Mammary epithelial cell (primary cell): ENCODE measurements at regions of chr13 and their contacts with region 1.

Region 1: DNA sequence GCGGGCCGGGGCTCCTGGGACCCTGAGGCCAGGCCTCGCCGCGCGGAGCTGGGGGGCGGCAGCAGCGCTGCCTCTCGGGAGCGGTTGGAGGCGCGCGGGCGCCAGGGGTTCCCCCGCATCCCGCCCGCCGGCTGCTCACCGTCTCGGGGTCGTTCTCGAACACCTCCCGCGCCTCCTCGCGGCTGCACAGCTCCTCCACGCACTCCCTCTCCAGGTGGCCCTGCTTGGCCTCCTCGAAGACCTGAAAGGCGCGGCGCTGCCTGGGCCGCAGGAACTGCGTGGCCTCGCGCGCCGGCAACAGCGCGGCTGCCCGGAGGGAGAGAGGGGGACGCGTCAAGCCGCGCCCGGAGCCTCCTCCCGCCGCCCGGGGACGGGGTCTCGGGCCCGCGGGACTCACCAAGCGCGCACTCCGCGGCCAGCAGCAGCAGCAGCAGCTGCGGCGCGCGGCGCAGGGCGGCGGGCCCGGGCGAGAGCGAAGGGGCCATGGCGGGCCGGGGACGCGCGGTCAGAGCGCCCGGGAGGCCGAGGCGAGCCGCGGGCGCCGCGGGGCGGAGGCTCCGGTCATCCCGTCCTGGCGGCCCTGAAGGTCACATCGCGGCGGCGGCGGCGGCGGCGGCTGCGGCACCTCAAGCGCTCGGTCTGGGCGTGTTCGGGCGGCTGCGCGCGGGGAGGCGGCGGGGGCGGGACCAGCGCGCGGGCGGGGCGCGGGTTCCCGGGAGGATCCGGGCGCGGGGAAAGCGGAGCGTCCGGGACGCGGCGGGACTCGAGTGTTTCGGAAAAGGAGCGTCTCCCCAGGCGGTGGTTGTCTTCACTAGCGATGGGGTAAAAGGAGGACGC is at the start of gene GAS6:
- DNase-seq: peak; percentile 46
- H3K4me3 ChIP-seq: peak within 1 kb of the TSS; percentile 45 to 86 (median 66)
- H3K27ac ChIP-seq: peak within 1 kb of the TSS; percentile 71
- H3K4me1 ChIP-seq: peaks cover 38% of the 10 kb centered on the region
- H3K27me3 ChIP-seq: no peaks in the 10 kb centered on the region
- CTCF ChIP-seq: peak in 1 of 2 donors; percentile 32
- total RNA-seq, gene GAS6: 221 to 311 TPM

Region 2: DNA sequence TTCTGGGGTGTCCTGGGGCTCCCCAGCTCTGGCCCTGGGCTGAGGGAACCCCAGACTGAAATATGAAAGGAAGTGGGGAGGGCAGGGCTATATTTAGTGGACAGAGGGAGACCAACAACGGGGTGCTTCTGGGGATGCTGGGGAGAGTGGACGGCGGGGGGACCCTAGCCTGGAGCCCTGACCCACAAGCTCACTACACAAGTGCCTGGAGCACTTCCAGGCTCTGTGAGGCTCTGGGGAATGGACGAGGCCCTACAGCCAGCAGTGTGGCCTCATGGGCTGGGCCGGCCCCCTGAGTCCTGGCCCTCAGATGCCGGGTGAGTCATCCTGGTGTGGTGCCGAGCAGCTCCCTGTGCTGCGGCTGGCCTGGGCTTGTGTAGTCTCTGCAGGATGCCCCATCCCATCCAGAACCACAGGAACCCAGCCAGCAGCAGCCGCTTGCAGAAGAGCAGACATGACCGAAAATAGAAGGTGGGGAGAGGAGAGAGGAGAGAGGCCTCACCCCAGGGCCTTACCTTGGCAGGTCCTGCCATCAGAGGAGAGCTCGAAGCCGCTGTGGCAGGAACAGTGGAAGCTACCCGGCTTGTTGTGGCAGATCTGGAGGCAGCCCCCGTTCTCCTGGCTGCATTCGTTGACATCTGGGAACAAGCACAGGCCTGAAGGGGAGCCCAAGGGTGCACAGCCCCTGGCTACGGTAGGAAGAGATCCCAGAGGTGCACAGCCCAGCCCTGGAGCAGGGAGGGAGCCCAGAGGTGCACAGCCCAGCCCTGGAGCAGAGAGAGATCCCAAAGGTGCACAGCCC is 25.9 kb before region 1 on chr13:
- CTCF ChIA-PET with region 1: interaction called, 3 read pairs
- dilution Hi-C with region 1: no loop called
- in situ Hi-C with region 1: no loop called
- intact Hi-C with region 1: loop called (anchors 1 kb)
- DNase-seq: peak; percentile 98
- H3K4me3 ChIP-seq: peak overlapping the region in 2 of 3 experiments; percentile 48 to 50
- H3K27ac ChIP-seq: peak overlapping the region; percentile 95
- H3K4me1 ChIP-seq: peaks cover 47% of the 10 kb centered on the region
- H3K27me3 ChIP-seq: no peaks in the 10 kb centered on the region
- CTCF ChIP-seq: no peak

Region 3: DNA sequence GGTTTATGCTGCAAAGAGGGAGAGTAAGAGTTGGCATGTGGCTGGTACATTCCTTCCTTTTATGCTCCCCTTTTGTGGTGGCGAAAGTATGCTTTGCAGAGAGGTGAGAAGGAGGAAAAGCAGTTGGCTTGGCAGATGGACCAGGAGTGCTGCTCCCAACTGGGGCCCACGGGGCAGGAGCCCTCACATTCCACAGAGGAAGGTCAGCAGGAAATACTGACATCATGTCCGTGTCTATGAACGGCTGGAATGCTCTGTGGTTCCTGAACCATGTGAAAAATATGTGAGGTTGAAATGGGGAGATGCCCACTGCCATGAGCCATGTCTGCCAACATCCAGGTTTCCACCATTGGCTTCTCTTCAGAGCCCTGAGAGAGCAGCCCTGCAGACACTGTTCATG is 33.5 kb after region 1 on chr13:
- CTCF ChIA-PET with region 1: no interaction called
- dilution Hi-C with region 1: no loop called
- in situ Hi-C with region 1: no loop called
- intact Hi-C with region 1: loop called (anchors 2 kb)
- DNase-seq: peak; percentile 94
- H3K4me3 ChIP-seq: no peak overlapping the region
- H3K27ac ChIP-seq: peak overlapping the region; percentile 87
- H3K4me1 ChIP-seq: peaks cover 30% of the 10 kb centered on the region
- H3K27me3 ChIP-seq: no peaks in the 10 kb centered on the region
- CTCF ChIP-seq: no peak

Region 4: DNA sequence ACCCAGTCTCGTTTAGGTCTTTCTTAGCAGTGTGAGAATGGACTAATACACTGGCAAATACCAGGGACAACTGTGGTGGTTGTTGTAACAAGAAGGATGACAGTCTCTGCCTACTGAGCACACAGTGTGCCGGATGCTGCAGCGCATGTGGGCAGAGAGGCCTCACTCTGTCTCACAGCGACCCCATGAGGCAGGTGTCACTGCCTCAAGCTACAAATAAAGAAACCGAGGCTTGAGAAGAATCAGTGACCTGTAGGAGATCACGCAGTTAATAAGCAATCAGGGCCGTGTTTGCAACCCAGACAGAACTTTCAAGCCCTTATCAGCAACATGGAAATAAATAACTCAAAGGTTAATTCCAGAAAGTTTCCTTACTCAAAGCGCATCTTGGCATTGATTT is 40.8 kb after region 1 on chr13:
- CTCF ChIA-PET with region 1: no interaction called
- dilution Hi-C with region 1: no loop called
- in situ Hi-C with region 1: no loop called
- intact Hi-C with region 1: loop called (anchors 2 kb)
- DNase-seq: no peak
- H3K4me3 ChIP-seq: no peak overlapping the region
- H3K27ac ChIP-seq: no peak overlapping the region
- H3K4me1 ChIP-seq: peaks cover 4% of the 10 kb centered on the region
- H3K27me3 ChIP-seq: no peaks in the 10 kb centered on the region
- CTCF ChIP-seq: peak; percentile 45 to 69

Region 5: GRCh38 chr13:113914333-113915011 is 50.8 kb after region 1 on chr13:
- CTCF ChIA-PET with region 1: no interaction called
- dilution Hi-C with region 1: no loop called
- in situ Hi-C with region 1: loop called in 1 of 2 experiments (anchors 5 kb)
- intact Hi-C with region 1: no loop called
- DNase-seq: no peak
- H3K4me3 ChIP-seq: no peak overlapping the region
- H3K27ac ChIP-seq: no peak overlapping the region
- H3K4me1 ChIP-seq: peaks cover 9% of the 10 kb centered on the region
- H3K27me3 ChIP-seq: no peaks in the 10 kb centered on the region
- CTCF ChIP-seq: no peak